Panc1 (cell line): ENCODE measurements at regions of chr7 and their contacts with region 1.

Region 1: DNA sequence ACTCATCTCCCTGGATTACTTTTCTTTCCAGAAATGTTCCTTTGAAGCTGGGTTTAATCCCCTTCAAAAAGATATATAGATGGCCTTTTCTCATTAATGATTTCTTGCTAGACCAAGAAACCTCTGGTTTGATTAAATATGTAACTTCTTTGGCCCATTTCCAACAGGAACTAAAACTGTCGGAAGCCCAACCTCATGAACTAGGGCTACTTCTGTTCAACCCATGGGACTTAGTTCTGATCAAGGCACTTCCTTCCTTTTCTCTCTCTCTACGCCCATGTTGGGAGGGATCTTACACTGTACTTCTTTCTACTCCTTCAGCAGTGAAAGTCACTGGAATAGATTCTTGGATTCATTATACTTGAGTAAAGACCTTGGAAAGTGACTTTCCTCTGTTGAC is 83.6 kb downstream of the TMEM106B start:
- DNase-seq: no peak
- ATAC-seq: no peak
- H3K4me3 ChIP-seq: no peak overlapping the region
- H3K27ac ChIP-seq: no peak overlapping the region
- H3K4me1 ChIP-seq: no peaks in the 10 kb centered on the region
- H3K27me3 ChIP-seq: no peaks in the 10 kb centered on the region
- CTCF ChIP-seq: no peak

Region 2: GRCh38 chr7:11706666-11707605 is 587.8 kb before region 1 on chr7:
- CTCF ChIA-PET with region 1: no interaction called
- POLR2A ChIA-PET with region 1: no interaction called
- in situ Hi-C with region 1: no loop called
- intact Hi-C with region 1: no loop called
- DNase-seq: no peak
- ATAC-seq: peak; percentile 83
- H3K4me3 ChIP-seq: no peak overlapping the region
- H3K27ac ChIP-seq: peak overlapping the region; percentile 86
- H3K4me1 ChIP-seq: peaks cover 48% of the 10 kb centered on the region
- H3K27me3 ChIP-seq: no peaks in the 10 kb centered on the region
- CTCF ChIP-seq: no peak

Region 3: GRCh38 chr7:12074887-12075286 is 219.8 kb before region 1 on chr7:
- CTCF ChIA-PET with region 1: interaction called, 11 read pairs
- POLR2A ChIA-PET with region 1: no interaction called
- in situ Hi-C with region 1: no loop called
- intact Hi-C with region 1: no loop called
- DNase-seq: no peak
- ATAC-seq: no peak
- H3K4me3 ChIP-seq: no peak overlapping the region
- H3K27ac ChIP-seq: no peak overlapping the region
- H3K4me1 ChIP-seq: no peaks in the 10 kb centered on the region
- H3K27me3 ChIP-seq: no peaks in the 10 kb centered on the region
- CTCF ChIP-seq: no peak

Region 4: GRCh38 chr7:12269100-12269895 is 25.4 kb before region 1 on chr7:
- CTCF ChIA-PET with region 1: interaction called, 13 read pairs
- POLR2A ChIA-PET with region 1: no interaction called
- in situ Hi-C with region 1: no loop called
- intact Hi-C with region 1: no loop called
- DNase-seq: no peak
- ATAC-seq: peak; percentile 44; the same call in 1 of the 2 replicates
- H3K4me3 ChIP-seq: no peak overlapping the region
- H3K27ac ChIP-seq: no peak overlapping the region
- H3K4me1 ChIP-seq: no peaks in the 10 kb centered on the region
- H3K27me3 ChIP-seq: no peaks in the 10 kb centered on the region
- CTCF ChIP-seq: no peak

Region 5: GRCh38 chr7:12475362-12476063 is 180.8 kb after region 1 on chr7:
- CTCF ChIA-PET with region 1: no interaction called
- POLR2A ChIA-PET with region 1: no interaction called
- in situ Hi-C with region 1: no loop called
- intact Hi-C with region 1: no loop called
- DNase-seq: no peak
- ATAC-seq: no peak
- H3K4me3 ChIP-seq: no peak overlapping the region
- H3K27ac ChIP-seq: no peak overlapping the region
- H3K4me1 ChIP-seq: no peaks in the 10 kb centered on the region
- H3K27me3 ChIP-seq: no peaks in the 10 kb centered on the region
- CTCF ChIP-seq: no peak